Activated CD4-positive, alpha-beta T cell treated with anti-CD3 and anti-CD28 coated beads, Interleukin-2, amount 10 ng/mL, durations not matched to agents 7 days and 5 days (primary cell): ENCODE measurements at regions of chr2 and their contacts with region 1.

Region 1: DNA sequence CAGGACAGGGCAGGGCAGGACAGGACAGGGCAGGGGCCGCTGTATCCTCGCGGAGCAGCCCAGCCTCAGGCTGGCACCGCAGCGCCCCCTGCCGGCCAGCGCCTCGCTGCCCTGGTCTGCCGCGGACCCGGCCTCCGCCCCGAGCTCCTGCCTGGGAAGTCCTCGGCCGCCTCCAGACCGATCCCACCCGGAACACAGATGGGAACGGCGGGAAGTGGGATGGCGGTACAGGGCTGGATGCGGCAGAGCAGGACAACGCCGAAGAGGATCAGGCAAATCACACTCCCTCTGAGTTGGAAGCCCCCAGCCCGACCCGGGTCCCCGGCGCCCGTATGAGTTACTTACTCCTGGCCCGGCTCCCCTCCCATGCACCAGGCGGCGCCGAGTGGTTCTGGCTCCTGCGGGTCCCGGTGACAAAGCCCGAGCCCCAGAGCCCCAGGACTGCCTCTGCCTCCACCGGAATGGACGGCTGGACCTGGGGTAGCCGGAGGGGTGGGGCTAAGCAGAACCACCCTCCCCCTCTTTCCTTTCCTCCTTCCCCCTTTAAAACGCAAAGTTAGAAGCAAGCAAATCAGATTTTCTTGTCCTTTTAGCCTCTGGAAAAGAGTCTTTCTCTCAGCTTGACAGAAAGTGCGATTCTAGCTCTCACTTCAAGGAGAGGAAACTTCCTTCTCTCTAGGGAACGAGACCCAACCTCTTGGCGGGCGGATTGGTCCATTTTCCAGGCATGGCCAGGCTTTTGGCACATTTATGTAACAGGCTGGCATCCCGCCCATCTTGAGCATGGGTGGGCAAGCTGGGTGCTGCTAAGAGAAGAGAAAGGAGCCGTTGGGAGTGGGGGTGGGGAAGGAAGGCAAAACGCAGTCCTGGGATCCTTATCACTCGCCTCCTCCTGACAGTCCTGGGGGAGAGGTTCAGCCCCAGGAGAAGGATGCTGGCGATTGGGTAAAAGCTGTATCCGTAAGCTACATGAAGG is at the start of gene TP53I3:
- DNase-seq: peak; percentile 77
- H3K4me3 Mint-ChIP-seq: peak within 1 kb of the TSS; percentile 82
- H3K27ac Mint-ChIP-seq: peak within 1 kb of the TSS; percentile 89
- H3K4me1 Mint-ChIP-seq: peaks cover 18% of the 10 kb centered on the region
- H3K27me3 Mint-ChIP-seq: no peaks in the 10 kb centered on the region
- total RNA-seq, gene TP53I3: 2.5 to 2.7 TPM

Region 2: DNA sequence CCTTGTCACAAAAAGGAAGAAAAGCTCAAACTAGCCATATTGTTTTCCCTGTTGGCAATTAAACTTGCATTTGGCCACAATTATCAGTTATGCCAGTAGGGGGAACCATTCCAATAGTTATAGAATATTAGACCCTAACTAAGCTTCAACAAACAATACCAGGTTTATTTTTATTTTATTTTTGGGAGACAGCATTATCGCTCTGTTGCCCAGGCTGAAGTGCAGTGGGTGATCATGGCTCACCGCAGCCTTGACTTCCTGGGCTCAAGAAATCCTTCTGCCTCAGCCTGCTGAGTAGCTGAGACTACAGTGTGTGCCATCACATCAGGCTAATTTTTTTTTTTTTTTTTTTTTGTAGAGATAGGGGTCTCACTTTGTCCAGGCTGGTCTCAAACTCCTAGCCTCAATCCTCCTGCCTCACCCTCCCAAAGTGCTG is 259.9 kb before region 1 on chr2:
- CTCF ChIA-PET with region 1: interaction called, 13 read pairs
- POLR2A ChIA-PET with region 1: no interaction called
- DNase-seq: peak; percentile 61
- H3K4me3 Mint-ChIP-seq: no peak overlapping the region
- H3K27ac Mint-ChIP-seq: no peak overlapping the region
- H3K4me1 Mint-ChIP-seq: no peaks in the 10 kb centered on the region
- H3K27me3 Mint-ChIP-seq: no peaks in the 10 kb centered on the region

Region 3: GRCh38 chr2:24046930-24047702 is 37.6 kb before region 1 on chr2 and contains the start of gene WDCP:
- CTCF ChIA-PET with region 1: interaction called, 10 read pairs
- POLR2A ChIA-PET with region 1: no interaction called
- DNase-seq: peak; percentile 97
- H3K4me3 Mint-ChIP-seq: peak within 1 kb of the TSS; percentile 92
- H3K27ac Mint-ChIP-seq: peak within 1 kb of the TSS; percentile 94
- H3K4me1 Mint-ChIP-seq: peaks cover 29% of the 10 kb centered on the region
- H3K27me3 Mint-ChIP-seq: peaks cover 2% of the 10 kb centered on the region
- total RNA-seq, gene WDCP: 16.3 to 21.8 TPM